Activated B cell treated with CpG ODN at 0.5 μM for 24 hours (primary cell): ENCODE measurements at regions of chrX and their contacts with region 1.

Region 1: GRCh38 chrX:40097497-40098263 is at the start of gene BCOR:
- DNase-seq: peak; percentile 59
- ATAC-seq: peak; percentile 16
- H3K4me3 Mint-ChIP-seq: peak within 1 kb of the TSS; percentile 89
- H3K27ac Mint-ChIP-seq: peak within 1 kb of the TSS; percentile 94
- H3K4me1 Mint-ChIP-seq: peaks cover 36% of the 10 kb centered on the region
- H3K27me3 Mint-ChIP-seq: no peaks in the 10 kb centered on the region
- CTCF ChIP-seq: no peak
- total RNA-seq, gene BCOR: 59.3 and 60.4 TPM in 2 replicates

Region 2: DNA sequence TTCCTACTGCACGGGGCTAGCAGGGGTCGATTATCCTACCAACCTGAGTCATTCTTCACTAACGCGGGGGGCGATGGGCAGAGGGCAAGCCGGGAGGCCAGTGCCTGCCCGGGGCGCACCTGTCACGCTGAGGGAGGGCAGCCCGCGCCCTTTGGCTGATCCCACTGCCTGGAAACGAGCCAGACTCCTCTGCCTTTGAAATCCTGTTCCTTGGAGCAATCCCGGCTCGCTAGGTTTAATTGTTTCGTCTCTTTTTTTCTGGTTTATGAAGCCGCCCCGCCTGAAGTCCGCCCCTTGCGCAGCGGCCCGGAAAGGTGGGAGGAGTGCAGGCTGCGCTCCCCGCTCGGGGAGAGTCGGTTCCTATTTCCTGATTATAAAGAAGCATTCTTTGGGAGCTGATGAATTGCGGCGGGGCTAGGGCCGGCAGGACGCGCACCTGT is 484.2 kb before region 1 on chrX:
- CTCF ChIA-PET with region 1: no interaction called
- POLR2A ChIA-PET with region 1: interaction called, 10 read pairs
- intact Hi-C with region 1: no loop called
- DNase-seq: peak; percentile 14
- ATAC-seq: peak; percentile 23
- H3K4me3 Mint-ChIP-seq: peak overlapping the region; percentile 67
- H3K27ac Mint-ChIP-seq: no peak overlapping the region
- H3K4me1 Mint-ChIP-seq: peaks cover 27% of the 10 kb centered on the region
- H3K27me3 Mint-ChIP-seq: peaks cover 22% of the 10 kb centered on the region
- CTCF ChIP-seq: no peak

Region 3: DNA sequence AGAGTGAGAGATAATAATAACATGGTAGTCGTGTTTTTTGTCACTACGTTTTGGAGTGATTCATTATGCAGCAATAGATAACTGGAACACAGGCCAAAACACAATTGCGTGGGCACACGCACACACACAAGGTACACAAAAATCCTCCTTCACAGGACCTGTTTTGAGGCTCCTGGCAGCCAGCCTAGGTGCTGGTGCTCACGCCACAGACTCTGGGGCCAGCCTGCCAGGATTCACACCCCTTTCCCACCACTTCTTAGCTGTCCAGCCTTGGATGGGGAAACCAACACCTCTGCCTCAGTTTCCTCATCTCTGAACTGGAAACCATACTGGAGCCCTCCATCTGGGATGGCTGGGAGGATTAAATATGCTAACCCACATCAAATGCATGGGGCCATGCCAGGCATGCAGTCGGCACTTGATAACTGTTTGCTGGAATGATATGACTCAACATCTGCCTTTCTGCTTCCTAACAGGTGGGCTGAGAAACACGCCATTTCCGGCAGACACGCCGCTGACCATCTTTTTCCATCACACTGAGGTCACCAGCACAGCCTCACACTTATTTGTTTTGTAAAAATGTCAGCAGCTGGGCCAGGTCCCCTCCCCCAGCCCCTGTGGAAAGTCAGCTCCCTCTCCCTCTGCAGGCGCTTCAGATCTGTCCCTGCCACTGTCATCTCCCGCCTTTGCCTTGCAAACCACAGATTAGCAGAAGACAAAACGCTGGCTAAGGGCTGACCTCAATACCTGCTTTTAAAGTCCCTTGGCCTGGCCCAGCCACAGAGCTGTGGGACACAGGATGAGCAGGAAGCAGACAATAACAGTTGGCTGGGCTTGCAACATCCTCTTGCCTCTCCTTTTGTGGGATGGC is 237.5 kb before region 1 on chrX:
- CTCF ChIA-PET with region 1: no interaction called
- POLR2A ChIA-PET with region 1: interaction called, 34 read pairs
- intact Hi-C with region 1: loop called (anchors 2 kb)
- DNase-seq: peak; percentile 37
- ATAC-seq: peak; percentile 53
- H3K4me3 Mint-ChIP-seq: no peak overlapping the region
- H3K27ac Mint-ChIP-seq: peak overlapping the region; percentile 50
- H3K4me1 Mint-ChIP-seq: peaks cover 33% of the 10 kb centered on the region
- H3K27me3 Mint-ChIP-seq: no peaks in the 10 kb centered on the region
- CTCF ChIP-seq: no peak

Region 4: DNA sequence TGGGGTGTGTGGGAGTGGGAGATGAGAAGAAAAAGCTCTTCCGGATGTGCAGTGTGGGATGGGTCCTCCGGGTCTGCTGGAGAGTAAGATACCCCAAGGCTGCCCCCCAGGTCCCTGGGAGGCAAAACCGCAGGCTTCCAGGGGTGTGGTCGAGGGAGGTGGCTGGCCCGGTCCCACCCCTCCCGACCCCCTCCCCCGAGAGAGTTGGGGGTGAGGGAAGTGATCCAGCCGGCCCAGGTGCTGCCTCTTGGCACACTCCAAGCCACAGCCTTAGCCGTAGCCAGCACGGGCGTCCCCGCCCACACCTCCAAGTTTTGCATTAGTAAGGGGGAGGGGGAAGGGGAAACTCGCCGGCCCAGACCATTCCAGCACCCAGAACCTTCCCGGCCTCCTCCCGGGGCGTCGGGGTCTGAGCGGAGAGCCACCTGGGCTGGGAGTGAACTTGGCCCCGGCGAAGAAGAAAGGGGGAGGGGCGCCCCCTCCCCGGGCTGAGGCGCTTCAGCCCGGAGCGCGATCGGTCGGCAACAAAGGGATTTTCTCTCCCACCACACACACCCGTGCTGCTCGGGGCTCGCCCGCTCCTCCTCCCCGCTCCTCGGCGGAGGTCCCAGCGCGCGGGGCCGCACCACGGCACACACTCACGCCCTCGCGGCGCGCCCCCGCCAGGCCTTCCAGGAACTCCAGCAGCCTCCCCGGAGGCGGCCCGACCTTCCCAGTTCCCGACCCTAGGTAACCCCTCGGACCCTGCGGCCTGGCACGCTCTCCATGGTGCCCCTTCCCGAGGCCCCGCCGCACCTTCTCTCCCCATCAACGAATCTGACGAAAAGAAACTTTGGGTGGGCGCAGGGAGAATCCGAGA is 14.3 kb before region 1 on chrX:
- CTCF ChIA-PET with region 1: no interaction called
- POLR2A ChIA-PET with region 1: interaction called, 23 read pairs
- intact Hi-C with region 1: loop called (anchors 1 kb)
- DNase-seq: peak; percentile 25
- ATAC-seq: peak; percentile 71
- H3K4me3 Mint-ChIP-seq: peak overlapping the region; percentile 71
- H3K27ac Mint-ChIP-seq: no peak overlapping the region
- H3K4me1 Mint-ChIP-seq: peaks cover 50% of the 10 kb centered on the region
- H3K27me3 Mint-ChIP-seq: no peaks in the 10 kb centered on the region
- CTCF ChIP-seq: no peak

Region 5: DNA sequence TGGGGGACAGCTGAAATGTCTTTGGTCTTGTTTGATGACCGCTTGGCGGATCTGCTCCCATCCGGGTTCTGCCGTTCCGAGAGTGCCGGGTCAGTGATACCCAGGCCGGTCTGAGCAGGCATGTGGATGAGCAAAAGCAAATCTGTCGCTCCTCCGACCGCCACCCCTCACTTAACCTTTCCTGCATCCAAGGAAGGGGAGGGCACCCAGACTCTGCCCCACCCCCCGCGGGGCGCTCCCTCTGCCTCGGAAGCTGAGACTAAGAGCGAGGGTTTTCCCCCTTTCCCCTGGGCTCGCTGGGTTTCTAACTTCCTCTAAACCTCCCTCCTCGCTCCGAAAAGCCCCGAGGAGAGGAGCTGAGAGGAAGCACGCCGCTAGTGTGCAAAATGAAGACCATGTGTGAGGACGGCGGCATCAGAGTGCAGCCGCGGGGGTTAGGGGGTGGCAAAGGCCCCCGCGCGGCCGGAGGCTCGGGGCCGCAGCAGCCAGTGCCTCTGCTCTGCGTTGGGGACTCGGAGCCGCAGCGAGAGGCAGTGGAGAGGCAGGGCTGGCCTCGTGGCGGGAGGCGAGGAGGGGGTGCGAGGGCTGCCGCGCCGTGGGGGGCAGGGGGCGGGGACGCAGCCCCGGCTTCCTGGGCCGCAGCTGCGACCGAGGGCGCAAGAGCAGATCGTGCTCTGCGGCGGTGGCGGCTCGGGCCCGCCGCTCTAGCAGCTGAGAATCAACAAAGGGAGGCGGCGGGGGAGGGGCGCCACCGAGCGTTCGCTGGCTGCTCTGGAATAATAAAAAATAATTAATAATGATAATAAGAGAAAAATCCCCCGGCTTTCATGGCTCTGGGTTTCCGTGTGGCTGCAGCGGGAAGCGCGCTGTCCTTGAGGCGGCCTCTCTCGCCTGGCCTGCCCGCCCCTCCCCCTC is 55.9 kb after region 1 on chrX:
- CTCF ChIA-PET with region 1: interaction called, 8 read pairs
- POLR2A ChIA-PET with region 1: interaction called, 129 read pairs
- intact Hi-C with region 1: loop called (anchors 1 kb)
- DNase-seq: peak; percentile 57
- ATAC-seq: peak; percentile 76
- H3K4me3 Mint-ChIP-seq: peak overlapping the region; percentile 80
- H3K27ac Mint-ChIP-seq: peak overlapping the region; percentile 77
- H3K4me1 Mint-ChIP-seq: peaks cover 38% of the 10 kb centered on the region
- H3K27me3 Mint-ChIP-seq: no peaks in the 10 kb centered on the region
- CTCF ChIP-seq: no peak

Region 6: GRCh38 chrX:40266490-40267333 is 169.0 kb after region 1 on chrX:
- CTCF ChIA-PET with region 1: no interaction called
- POLR2A ChIA-PET with region 1: interaction called, 5 read pairs
- intact Hi-C with region 1: loop called (anchors 5 kb)
- DNase-seq: peak; percentile 12
- ATAC-seq: peak; percentile 45
- H3K4me3 Mint-ChIP-seq: peak overlapping the region; percentile 72
- H3K27ac Mint-ChIP-seq: no peak overlapping the region
- H3K4me1 Mint-ChIP-seq: peaks cover 14% of the 10 kb centered on the region
- H3K27me3 Mint-ChIP-seq: no peaks in the 10 kb centered on the region
- CTCF ChIP-seq: no peak

Region 7: GRCh38 chrX:40524423-40524822 is 426.7 kb after region 1 on chrX:
- CTCF ChIA-PET with region 1: no interaction called
- POLR2A ChIA-PET with region 1: no interaction called
- intact Hi-C with region 1: no loop called
- DNase-seq: no peak
- ATAC-seq: no peak
- H3K4me3 Mint-ChIP-seq: no peak overlapping the region
- H3K27ac Mint-ChIP-seq: no peak overlapping the region
- H3K4me1 Mint-ChIP-seq: no peaks in the 10 kb centered on the region
- H3K27me3 Mint-ChIP-seq: no peaks in the 10 kb centered on the region
- CTCF ChIP-seq: no peak